GM12878 (cell line): ENCODE measurements at regions of chr1 and their contacts with region 1.

Region 1: DNA sequence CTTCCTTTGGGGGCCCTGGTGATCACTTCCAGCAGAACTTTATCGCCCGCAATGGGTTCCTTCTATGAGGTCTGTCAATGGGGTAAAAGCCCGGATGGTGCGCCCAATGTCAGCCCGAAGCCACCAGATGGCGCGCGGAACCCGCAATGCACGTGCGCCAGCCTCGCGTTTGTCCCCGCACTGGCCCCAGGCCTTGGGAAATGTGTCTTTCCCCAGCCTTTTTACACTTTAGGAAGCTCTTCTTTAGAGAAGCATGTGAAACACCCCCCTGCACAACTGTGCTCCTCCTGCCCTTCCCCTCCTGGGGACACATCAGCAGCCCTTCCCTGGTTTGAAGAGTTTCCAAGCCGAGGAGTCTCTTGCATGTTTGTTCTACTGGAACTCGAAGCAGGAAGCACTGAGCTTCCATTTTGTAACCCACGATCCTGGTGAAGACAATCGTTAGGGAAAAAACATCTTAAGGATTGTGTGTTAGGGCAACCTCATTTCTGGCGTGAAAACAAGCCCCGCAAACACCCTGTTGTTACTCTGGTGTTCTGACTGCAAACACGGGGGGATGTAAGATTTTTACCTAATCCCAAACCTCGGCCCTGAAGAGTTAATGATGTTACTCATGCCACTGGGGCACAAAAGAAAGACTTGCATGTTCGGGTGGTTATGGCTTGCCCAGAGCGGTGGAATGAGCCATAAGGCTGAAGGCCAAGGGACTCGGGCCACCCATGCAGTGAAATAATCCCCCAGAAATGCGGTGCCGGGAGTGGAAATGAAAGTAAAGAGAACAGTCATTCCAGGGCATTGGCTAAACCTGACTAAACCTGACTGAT is 20.4 kb upstream of the TARBP1 start:
- DNase-seq: no peak
- ATAC-seq: peak; percentile 77
- H3K4me3 ChIP-seq: peak overlapping the region; percentile 14
- H3K27ac ChIP-seq: peak overlapping the region; percentile 69
- H3K4me1 ChIP-seq: peaks cover 45% of the 10 kb centered on the region
- H3K27me3 ChIP-seq: no peaks in the 10 kb centered on the region
- CTCF ChIP-seq: peak; percentile 94 to 96 (median 95); a peak in 5 of 6 replicates
- EP300 ChIP-seq: no peak
- POLR2A ChIP-seq: no peak
- RAD21 ChIP-seq: peak; percentile 96

Region 2: DNA sequence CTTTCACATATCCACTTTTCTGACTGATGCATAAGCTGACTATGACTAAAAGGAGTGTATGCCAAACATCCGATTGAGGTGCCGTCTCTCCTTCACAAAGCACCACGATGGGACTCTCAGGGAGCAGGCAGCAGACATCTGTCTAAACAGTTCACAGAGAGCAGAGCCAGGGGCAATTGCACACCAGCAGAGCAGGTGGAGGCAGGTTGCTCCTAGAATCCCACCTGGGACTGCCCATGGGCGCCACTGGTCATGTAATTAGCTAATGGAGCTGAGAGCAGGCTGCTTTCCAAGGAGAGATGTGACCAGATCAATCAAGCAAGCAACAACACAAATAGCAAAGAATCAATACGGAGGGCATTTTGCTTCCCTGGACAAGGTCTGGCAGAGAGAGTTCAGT is 156.6 kb before region 1 on chr1:
- CTCF ChIA-PET with region 1: no interaction called
- POLR2A ChIA-PET with region 1: no interaction called
- RAD21 ChIA-PET with region 1: no interaction called
- SMC1A ChIA-PET with region 1: no interaction called
- in situ Hi-C with region 1: no loop called
- intact Hi-C with region 1: no loop called
- DNase-seq: no peak
- ATAC-seq: no peak
- H3K4me3 ChIP-seq: no peak overlapping the region
- H3K27ac ChIP-seq: no peak overlapping the region
- H3K4me1 ChIP-seq: no peaks in the 10 kb centered on the region
- H3K27me3 ChIP-seq: no peaks in the 10 kb centered on the region
- CTCF ChIP-seq: no peak
- EP300 ChIP-seq: no peak
- POLR2A ChIP-seq: no peak
- RAD21 ChIP-seq: no peak

Region 3: GRCh38 chr1:234535763-234536515 is 36.6 kb after region 1 on chr1:
- CTCF ChIA-PET with region 1: interaction called, 3 read pairs
- POLR2A ChIA-PET with region 1: no interaction called
- RAD21 ChIA-PET with region 1: interaction called, 11 read pairs
- SMC1A ChIA-PET with region 1: interaction called, 3 read pairs
- in situ Hi-C with region 1: no loop called
- intact Hi-C with region 1: no loop called
- DNase-seq: no peak
- ATAC-seq: no peak
- H3K4me3 ChIP-seq: no peak overlapping the region
- H3K27ac ChIP-seq: no peak overlapping the region
- H3K4me1 ChIP-seq: no peaks in the 10 kb centered on the region
- H3K27me3 ChIP-seq: no peaks in the 10 kb centered on the region
- CTCF ChIP-seq: no peak
- EP300 ChIP-seq: no peak
- POLR2A ChIP-seq: no peak
- RAD21 ChIP-seq: no peak

Region 4: DNA sequence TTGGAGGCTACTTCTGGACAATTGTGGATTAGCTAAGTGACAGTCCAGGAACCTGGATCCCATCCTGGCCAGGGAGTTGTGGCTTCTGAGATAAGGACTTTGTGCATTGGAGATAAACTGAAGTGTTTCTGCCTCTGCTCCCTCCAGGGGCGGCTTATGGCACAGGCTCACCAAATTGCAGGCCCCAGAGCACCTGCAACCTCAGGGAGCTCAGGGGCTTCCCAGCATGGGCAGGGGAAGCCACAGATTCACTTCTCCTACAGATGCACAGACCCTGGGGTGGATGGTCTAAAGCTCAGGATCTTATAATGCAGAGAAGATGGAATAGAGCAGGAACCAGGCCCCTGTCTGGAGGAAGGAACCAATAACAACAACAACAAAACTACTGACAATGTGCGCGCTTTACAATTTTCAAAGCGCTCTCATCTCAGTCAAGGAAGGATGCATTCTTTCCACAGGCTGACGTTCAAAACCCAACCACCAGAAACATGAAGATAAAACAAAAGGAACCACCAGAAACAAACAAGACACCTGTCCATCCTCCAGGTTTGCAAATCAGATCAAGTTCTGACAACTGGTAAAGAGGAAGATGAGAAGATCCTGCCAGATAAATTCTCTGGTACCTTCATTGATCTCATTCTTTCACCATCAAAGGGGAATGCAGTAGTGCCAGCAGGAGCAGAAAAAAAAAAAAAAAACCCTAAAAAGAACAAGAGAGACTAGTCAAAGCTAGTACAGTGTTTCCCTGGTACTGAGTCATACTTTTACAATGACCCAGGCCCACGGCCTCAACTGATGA is 231.6 kb after region 1 on chr1:
- CTCF ChIA-PET with region 1: interaction called, 5 read pairs
- POLR2A ChIA-PET with region 1: no interaction called
- RAD21 ChIA-PET with region 1: interaction called, 6 read pairs
- SMC1A ChIA-PET with region 1: interaction called, 5 read pairs
- in situ Hi-C with region 1: loop called (anchors 5 kb)
- intact Hi-C with region 1: no loop called
- DNase-seq: peak; percentile 68
- ATAC-seq: peak; percentile 80
- H3K4me3 ChIP-seq: peak overlapping the region; percentile 17; the same call in 1 of the 2 replicates
- H3K27ac ChIP-seq: peak overlapping the region; percentile 82
- H3K4me1 ChIP-seq: peaks cover 59% of the 10 kb centered on the region
- H3K27me3 ChIP-seq: no peaks in the 10 kb centered on the region
- CTCF ChIP-seq: peak; percentile 17 to 30 (median 28); a peak in 3 of 6 replicates
- EP300 ChIP-seq: peak; percentile 53 to 57; a peak in 3 of 4 replicates
- POLR2A ChIP-seq: no peak
- RAD21 ChIP-seq: peak; percentile 46; the same call in 1 of the 2 replicates

Region 5: GRCh38 chr1:234925440-234926263 is 426.3 kb after region 1 on chr1:
- CTCF ChIA-PET with region 1: interaction called, 4 read pairs
- POLR2A ChIA-PET with region 1: no interaction called
- RAD21 ChIA-PET with region 1: interaction called, 5 read pairs
- SMC1A ChIA-PET with region 1: interaction called, 8 read pairs
- in situ Hi-C with region 1: no loop called
- intact Hi-C with region 1: loop called (anchors 2 kb)
- DNase-seq: peak; percentile 40
- ATAC-seq: peak; percentile 1
- H3K4me3 ChIP-seq: peak overlapping the region; percentile 40; the same call in 1 of the 2 replicates
- H3K27ac ChIP-seq: peak overlapping the region; percentile 95
- H3K4me1 ChIP-seq: peaks cover 48% of the 10 kb centered on the region
- H3K27me3 ChIP-seq: no peaks in the 10 kb centered on the region
- CTCF ChIP-seq: no peak
- EP300 ChIP-seq: no peak; a peak in 1 of 4 replicates
- POLR2A ChIP-seq: no peak
- RAD21 ChIP-seq: no peak

Region 6: GRCh38 chr1:234978397-234979295 is 479.3 kb after region 1 on chr1:
- CTCF ChIA-PET with region 1: interaction called, 4 read pairs
- POLR2A ChIA-PET with region 1: no interaction called
- RAD21 ChIA-PET with region 1: interaction called, 12 read pairs
- SMC1A ChIA-PET with region 1: interaction called, 10 read pairs
- in situ Hi-C with region 1: loop called (anchors 5 kb)
- intact Hi-C with region 1: loop called (anchors 1 kb)
- DNase-seq: peak; percentile 94
- ATAC-seq: peak; percentile 66
- H3K4me3 ChIP-seq: peak overlapping the region; percentile 29
- H3K27ac ChIP-seq: peak overlapping the region; percentile 98
- H3K4me1 ChIP-seq: peaks cover 76% of the 10 kb centered on the region
- H3K27me3 ChIP-seq: no peaks in the 10 kb centered on the region
- CTCF ChIP-seq: peak in 2 of 3 experiments; percentile 13 to 16; a peak in 2 of 6 replicates
- EP300 ChIP-seq: peak; percentile 96 to 99
- POLR2A ChIP-seq: 0 out of 2 replicates have a peak, but pooled peaks have one; percentile 56
- RAD21 ChIP-seq: peak; percentile 44

Region 7: GRCh38 chr1:235093696-235094592 is 594.6 kb after region 1 on chr1:
- CTCF ChIA-PET with region 1: interaction called, 31 read pairs
- POLR2A ChIA-PET with region 1: interaction called, 9 read pairs
- RAD21 ChIA-PET with region 1: interaction called, 12 read pairs
- SMC1A ChIA-PET with region 1: interaction called, 8 read pairs
- in situ Hi-C with region 1: no loop called
- intact Hi-C with region 1: no loop called
- DNase-seq: no peak
- ATAC-seq: peak; percentile 94
- H3K4me3 ChIP-seq: no peak overlapping the region
- H3K27ac ChIP-seq: no peak overlapping the region
- H3K4me1 ChIP-seq: no peaks in the 10 kb centered on the region; the same call in 1 of the 2 replicates
- H3K27me3 ChIP-seq: no peaks in the 10 kb centered on the region
- CTCF ChIP-seq: peak; percentile 91 to 97 (median 94)
- EP300 ChIP-seq: no peak
- POLR2A ChIP-seq: no peak
- RAD21 ChIP-seq: peak; percentile 81